Activated CD4-positive, alpha-beta memory T cell treated with anti-CD3 and anti-CD28 coated beads for 36 hours (primary cell): ENCODE measurements at regions of chr6 and their contacts with region 1.

Region 1: DNA sequence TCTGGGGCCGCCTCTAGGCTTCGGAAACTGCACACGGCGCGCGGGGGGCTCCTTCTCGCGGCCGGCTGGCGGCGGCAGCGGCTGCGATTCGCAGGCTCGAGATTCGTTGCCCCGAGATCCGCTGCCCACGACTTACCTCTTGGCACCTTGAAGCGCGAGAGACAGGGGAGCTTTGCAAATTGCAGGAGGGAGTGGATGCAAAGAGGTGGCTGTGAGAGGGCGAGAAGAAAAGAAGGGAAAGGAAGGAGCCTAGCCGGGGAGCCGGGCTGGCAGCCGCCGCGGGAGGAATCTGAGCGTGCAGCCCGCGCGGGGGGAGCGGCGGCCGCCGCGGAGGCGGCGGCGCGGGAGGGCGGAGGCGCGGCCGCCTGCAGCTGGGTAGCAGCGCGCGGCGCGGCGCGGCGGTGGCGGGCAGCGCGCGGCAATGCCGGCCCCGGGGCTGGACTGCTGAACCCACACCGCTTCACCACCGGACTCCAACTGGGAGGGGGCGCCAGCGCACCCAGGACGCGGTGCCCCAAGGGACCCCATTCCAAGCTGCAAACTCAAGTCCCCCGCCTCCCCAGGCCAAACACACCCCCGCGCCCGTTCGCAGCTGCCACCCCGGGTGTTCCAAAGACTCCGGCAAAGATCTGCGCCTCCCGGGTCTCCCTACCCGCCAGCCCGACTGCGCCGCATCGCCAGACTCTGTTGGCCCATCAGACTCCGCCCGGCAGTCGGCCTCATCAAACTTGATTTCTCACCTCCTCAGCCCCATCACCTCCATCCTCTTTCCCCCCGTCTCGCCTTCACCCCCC is 44.2 kb upstream of the SUPT3H start:
- DNase-seq: peak; percentile 78
- H3K4me3 Mint-ChIP-seq: peak overlapping the region; percentile 91
- H3K27ac Mint-ChIP-seq: peak overlapping the region; percentile 97
- H3K4me1 Mint-ChIP-seq: peaks cover 41% of the 10 kb centered on the region
- H3K27me3 Mint-ChIP-seq: no peaks in the 10 kb centered on the region

Region 2: DNA sequence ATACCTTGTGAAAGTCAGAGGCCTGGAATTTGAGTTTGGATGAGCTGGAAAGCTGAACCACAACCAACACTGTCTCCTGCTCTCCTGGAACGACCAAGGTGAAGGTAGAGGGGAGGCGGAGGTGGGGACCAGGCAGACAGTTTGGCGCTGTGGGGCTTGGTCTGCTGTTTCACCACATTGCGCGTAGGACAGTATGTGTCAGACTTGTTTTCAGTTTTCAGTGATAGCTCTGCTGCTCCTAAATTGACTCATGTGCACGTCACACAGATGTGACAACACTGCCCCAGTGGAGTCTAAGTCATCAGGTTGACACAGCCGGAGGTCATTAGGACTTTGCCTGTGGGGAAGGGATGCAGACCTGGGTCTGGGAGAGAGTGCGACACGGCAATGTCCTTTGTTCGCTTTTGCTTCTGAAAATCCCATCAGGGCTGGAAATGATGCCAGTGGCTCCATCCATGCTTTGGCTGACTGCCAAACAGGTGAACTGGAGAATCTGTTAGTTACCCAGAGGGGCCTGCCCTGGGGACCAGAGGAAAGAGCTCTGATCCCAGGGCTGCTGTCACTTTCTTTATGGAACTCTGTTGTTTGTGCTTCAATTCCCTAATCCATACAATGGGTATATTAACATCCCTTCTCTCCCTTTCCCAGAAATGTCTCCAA is 778.9 kb before region 1 on chr6:
- CTCF ChIA-PET with region 1: no interaction called
- POLR2A ChIA-PET with region 1: interaction called, 3 read pairs
- intact Hi-C with region 1: loop called (anchors 2 kb)
- DNase-seq: peak; percentile 88
- H3K4me3 Mint-ChIP-seq: peak overlapping the region; percentile 33
- H3K27ac Mint-ChIP-seq: peak overlapping the region; percentile 96
- H3K4me1 Mint-ChIP-seq: peaks cover 39% of the 10 kb centered on the region
- H3K27me3 Mint-ChIP-seq: no peaks in the 10 kb centered on the region

Region 3: GRCh38 chr6:44932651-44933091 is 489.2 kb before region 1 on chr6:
- CTCF ChIA-PET with region 1: no interaction called
- POLR2A ChIA-PET with region 1: no interaction called
- intact Hi-C with region 1: loop called (anchors 5 kb)
- DNase-seq: peak; percentile 43
- H3K4me3 Mint-ChIP-seq: peak overlapping the region; percentile 80
- H3K27ac Mint-ChIP-seq: peak overlapping the region; percentile 88
- H3K4me1 Mint-ChIP-seq: peaks cover 41% of the 10 kb centered on the region
- H3K27me3 Mint-ChIP-seq: no peaks in the 10 kb centered on the region

Region 4: GRCh38 chr6:45377554-45378333 is 44.2 kb before region 1 on chr6 and contains the start of gene SUPT3H:
- CTCF ChIA-PET with region 1: interaction called, 16 read pairs
- POLR2A ChIA-PET with region 1: interaction called, 27 read pairs
- intact Hi-C with region 1: loop called (anchors 1 kb)
- DNase-seq: peak; percentile 96
- H3K4me3 Mint-ChIP-seq: peak within 1 kb of the TSS; percentile 94
- H3K27ac Mint-ChIP-seq: peak within 1 kb of the TSS; percentile 97
- H3K4me1 Mint-ChIP-seq: peaks cover 27% of the 10 kb centered on the region
- H3K27me3 Mint-ChIP-seq: no peaks in the 10 kb centered on the region
- total RNA-seq, gene SUPT3H: 17.4 to 18.2 TPM

Region 5: DNA sequence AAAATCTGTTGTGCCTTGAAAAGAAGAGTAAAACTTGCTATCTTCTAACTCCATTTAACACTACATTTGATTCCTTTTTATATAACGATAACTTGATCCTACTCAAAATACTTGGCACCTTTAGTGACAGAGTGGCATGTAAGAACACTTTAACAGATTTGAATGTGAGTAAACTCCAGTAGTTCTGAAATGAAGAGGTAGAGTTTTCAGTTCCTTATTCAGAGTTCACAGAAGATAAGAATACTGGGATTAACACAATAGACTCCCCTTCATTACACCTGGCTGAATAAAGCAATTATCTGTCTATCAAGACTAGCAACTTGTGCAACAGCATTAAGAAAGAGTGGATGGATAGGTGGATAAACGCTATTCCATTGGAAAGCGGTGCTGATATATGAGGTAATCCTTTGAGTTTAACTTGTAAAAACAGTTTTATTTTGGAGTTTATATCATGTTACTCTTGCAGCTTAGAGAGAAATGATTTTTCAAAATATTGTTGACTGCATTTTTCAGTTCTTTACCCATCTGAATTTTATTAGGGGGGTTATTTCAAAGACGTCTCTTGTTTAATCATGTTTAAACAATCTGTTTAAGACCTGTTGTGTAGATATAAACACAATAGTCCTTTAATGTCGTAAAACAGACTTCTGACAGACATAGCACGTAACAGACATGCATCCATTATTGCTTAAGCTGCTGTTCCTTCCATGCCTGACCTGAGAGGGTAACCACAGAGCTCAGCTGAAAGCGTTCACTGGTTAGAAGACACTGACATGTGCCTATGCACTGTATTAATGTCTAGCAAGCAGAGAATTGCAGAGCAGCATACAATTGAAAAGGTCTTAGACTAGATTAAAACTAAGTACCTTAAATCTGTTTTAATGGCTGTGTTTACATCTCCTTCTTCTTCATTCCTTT is 58.2 kb after region 1 on chr6:
- CTCF ChIA-PET with region 1: interaction called, 3 read pairs
- POLR2A ChIA-PET with region 1: interaction called, 3 read pairs
- intact Hi-C with region 1: loop called (anchors 2 kb)
- DNase-seq: no peak
- H3K4me3 Mint-ChIP-seq: no peak overlapping the region
- H3K27ac Mint-ChIP-seq: no peak overlapping the region
- H3K4me1 Mint-ChIP-seq: peaks cover 17% of the 10 kb centered on the region
- H3K27me3 Mint-ChIP-seq: no peaks in the 10 kb centered on the region

Region 6: DNA sequence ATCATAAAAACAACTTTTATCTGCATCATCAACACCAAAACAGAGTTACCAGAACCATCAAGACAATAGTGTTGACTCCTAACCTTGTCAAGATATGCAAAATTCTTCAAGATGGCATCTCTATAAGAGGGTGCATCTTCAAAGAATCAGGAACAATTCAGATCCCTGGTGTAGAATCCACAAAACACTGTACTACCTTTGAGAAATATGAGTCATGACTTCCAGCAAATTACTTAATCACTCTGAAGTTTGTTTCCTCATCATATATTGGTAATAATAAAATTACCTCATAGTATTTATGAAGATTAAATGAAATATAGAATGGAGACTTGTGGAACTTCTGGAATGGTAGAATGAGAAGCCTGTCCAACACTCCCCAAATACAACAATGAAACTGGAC is 177.1 kb after region 1 on chr6:
- CTCF ChIA-PET with region 1: no interaction called
- POLR2A ChIA-PET with region 1: no interaction called
- intact Hi-C with region 1: no loop called
- DNase-seq: no peak
- H3K4me3 Mint-ChIP-seq: no peak overlapping the region
- H3K27ac Mint-ChIP-seq: no peak overlapping the region
- H3K4me1 Mint-ChIP-seq: peaks cover 32% of the 10 kb centered on the region
- H3K27me3 Mint-ChIP-seq: no peaks in the 10 kb centered on the region

Region 7: GRCh38 chr6:45801471-45802289 is 379.8 kb after region 1 on chr6:
- CTCF ChIA-PET with region 1: no interaction called
- POLR2A ChIA-PET with region 1: interaction called, 3 read pairs
- intact Hi-C with region 1: loop called (anchors 5 kb)
- DNase-seq: peak; percentile 84
- H3K4me3 Mint-ChIP-seq: no peak overlapping the region
- H3K27ac Mint-ChIP-seq: no peak overlapping the region
- H3K4me1 Mint-ChIP-seq: no peaks in the 10 kb centered on the region
- H3K27me3 Mint-ChIP-seq: peaks cover 8% of the 10 kb centered on the region